H1 (cell line): ENCODE measurements at regions of chr11 and their contacts with region 1.

Region 1: DNA sequence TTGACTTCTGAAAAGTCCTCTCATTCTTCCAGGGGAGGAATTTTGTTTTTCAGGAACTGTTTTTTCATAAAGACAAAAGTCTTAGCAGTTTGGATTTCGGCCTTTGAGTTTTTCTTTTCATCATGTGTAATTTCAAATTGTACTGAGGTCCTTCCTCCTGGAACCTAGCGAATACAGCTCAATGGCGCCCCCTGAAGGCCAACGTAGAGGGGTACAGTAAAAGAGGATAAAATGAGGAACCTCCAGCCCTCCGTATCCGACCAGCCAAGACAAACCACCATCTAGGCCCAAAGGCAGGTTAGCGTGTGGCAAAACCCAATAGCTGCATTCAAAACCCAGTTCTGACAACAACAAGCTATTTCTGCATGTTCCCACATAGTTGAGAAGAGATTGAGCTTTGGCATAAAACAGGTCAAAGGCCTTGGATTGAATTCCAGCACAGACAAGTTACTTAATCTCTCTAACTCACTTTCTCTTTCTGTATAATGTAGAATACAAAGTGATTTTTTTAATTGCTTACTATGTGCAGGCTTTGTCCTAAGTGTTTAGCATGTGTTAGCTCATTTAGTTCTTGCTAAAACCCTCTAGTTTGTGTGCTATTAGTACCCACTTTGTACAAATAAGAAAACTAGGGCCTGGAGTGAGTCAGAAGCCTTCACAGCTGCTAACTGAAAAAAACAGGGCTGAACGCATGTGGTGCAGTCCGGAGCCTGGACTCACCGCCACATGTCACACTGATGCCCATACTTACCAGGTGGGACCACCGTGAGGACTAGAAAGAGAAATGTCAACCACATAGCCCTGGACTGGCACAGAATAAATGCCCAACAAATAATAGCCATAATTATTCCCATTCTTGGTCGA is 43.2 kb upstream of the ETS1 start:
- DNase-seq: peak; percentile 50 to 89
- H3K4me3 ChIP-seq: no peak overlapping the region
- H3K27ac ChIP-seq: no peak overlapping the region
- H3K4me1 ChIP-seq: peaks cover 0 to 2% (median 1%) of the 10 kb centered on the region in 4 experiments; a peak in 1 of 7 replicates
- H3K27me3 ChIP-seq: no peaks in the 10 kb centered on the region
- CTCF ChIP-seq: peak; percentile 62 to 88 (median 84)
- EP300 ChIP-seq: no peak
- POLR2A ChIP-seq: no peak
- RAD21 ChIP-seq: peak; percentile 94 to 97

Region 2: DNA sequence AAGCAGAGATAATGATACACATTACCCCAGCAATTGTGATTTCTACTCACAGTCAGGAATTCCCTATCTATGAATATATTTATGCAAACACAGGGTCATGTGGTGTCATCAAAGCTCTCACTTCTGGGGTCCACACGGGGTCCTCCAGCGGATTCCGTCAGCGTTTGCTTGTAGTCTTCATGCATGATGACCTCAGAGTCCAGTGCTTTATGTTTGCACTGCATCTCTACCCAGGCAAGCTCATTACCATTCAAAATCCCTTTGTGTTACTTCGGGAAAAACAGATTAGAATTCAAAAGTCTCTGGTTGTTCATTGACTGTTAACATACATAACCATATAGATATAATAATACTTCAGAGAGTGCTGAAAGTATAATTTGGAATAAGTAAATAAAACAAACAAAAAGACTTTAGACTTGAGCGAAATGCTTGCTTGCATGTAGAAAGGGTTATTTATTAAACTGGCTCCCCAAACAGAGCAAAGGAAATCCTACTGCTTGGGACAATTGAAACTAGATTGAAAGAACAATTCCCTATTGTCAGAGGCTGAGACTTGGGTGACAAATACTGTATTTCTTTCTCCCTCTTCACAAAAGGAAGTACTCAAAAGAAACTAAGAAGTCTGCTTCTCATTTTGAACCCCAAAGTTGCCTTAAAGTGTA is 466.4 kb before region 1 on chr11:
- CTCF ChIA-PET with region 1: interaction called, 94 read pairs
- POLR2A ChIA-PET with region 1: no interaction called
- DNase-seq: no peak
- H3K4me3 ChIP-seq: no peak overlapping the region
- H3K27ac ChIP-seq: no peak overlapping the region
- H3K4me1 ChIP-seq: no peaks in the 10 kb centered on the region
- H3K27me3 ChIP-seq: peaks cover 0 to 1% (median 0%) of the 10 kb centered on the region in 4 experiments; a peak in 1 of 7 replicates
- CTCF ChIP-seq: no peak
- EP300 ChIP-seq: no peak
- POLR2A ChIP-seq: no peak
- RAD21 ChIP-seq: no peak

Region 3: GRCh38 chr11:128304666-128305485 is 325.7 kb before region 1 on chr11:
- CTCF ChIA-PET with region 1: interaction called, 25 read pairs
- POLR2A ChIA-PET with region 1: no interaction called
- DNase-seq: no peak
- H3K4me3 ChIP-seq: no peak overlapping the region
- H3K27ac ChIP-seq: no peak overlapping the region
- H3K4me1 ChIP-seq: no peaks in the 10 kb centered on the region
- H3K27me3 ChIP-seq: no peaks in the 10 kb centered on the region
- CTCF ChIP-seq: no peak
- EP300 ChIP-seq: no peak
- POLR2A ChIP-seq: no peak
- RAD21 ChIP-seq: no peak

Region 4: GRCh38 chr11:128434818-128435217 is 195.8 kb before region 1 on chr11:
- CTCF ChIA-PET with region 1: interaction called, 10 read pairs
- POLR2A ChIA-PET with region 1: no interaction called
- DNase-seq: no peak
- H3K4me3 ChIP-seq: no peak overlapping the region
- H3K27ac ChIP-seq: no peak overlapping the region
- H3K4me1 ChIP-seq: no peaks in the 10 kb centered on the region
- H3K27me3 ChIP-seq: no peaks in the 10 kb centered on the region
- CTCF ChIP-seq: no peak
- EP300 ChIP-seq: no peak
- POLR2A ChIP-seq: no peak
- RAD21 ChIP-seq: no peak

Region 5: DNA sequence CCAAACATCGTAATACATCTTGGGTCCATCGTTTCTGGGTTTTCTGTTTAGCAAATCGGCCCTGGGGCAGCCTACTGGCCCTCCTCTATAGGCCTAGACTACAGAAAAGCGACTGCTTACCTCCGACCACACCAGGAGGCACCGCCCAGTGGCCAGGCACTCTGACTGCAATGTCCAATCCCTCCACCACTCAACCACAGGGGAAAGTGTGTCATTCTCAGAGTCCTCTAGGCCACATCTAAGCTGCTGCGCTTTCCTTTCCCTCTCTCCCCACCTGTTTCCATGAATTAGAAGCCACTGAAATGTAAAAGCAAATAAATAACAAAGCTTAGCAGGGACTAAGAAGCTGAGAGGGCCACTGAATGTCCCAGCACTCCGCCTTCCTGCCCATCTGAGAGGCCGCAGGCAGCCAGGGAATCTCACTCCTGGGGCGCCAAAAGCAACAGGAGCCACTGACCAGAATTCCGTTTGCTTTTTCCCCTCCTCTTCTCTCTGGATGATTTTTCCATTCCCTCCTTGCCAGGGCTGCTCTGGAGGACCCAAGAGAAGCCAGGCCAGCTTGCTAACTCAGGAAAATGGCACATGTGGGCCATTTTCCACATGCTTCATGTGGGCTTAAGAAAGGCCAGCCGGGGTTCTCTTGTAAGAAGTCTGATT is 13.2 kb after region 1 on chr11:
- CTCF ChIA-PET with region 1: interaction called, 43 read pairs
- POLR2A ChIA-PET with region 1: interaction called, 3 read pairs
- DNase-seq: no peak
- H3K4me3 ChIP-seq: no peak overlapping the region
- H3K27ac ChIP-seq: no peak overlapping the region
- H3K4me1 ChIP-seq: no peaks in the 10 kb centered on the region
- H3K27me3 ChIP-seq: no peaks in the 10 kb centered on the region
- CTCF ChIP-seq: peak; percentile 43 to 65 (median 62)
- EP300 ChIP-seq: no peak
- POLR2A ChIP-seq: no peak
- RAD21 ChIP-seq: peak; percentile 49 to 51

Region 6: GRCh38 chr11:128757235-128757711 is 126.7 kb after region 1 on chr11:
- CTCF ChIA-PET with region 1: interaction called, 11 read pairs
- POLR2A ChIA-PET with region 1: no interaction called
- DNase-seq: no peak
- H3K4me3 ChIP-seq: no peak overlapping the region
- H3K27ac ChIP-seq: no peak overlapping the region
- H3K4me1 ChIP-seq: peaks cover 0 to 3% (median 0%) of the 10 kb centered on the region in 4 experiments; a peak in 1 of 7 replicates
- H3K27me3 ChIP-seq: no peaks in the 10 kb centered on the region; a peak in 1 of 7 replicates
- CTCF ChIP-seq: peak; percentile 41 to 79 (median 64)
- EP300 ChIP-seq: no peak
- POLR2A ChIP-seq: no peak
- RAD21 ChIP-seq: peak; percentile 75 to 81

Region 7: GRCh38 chr11:128859563-128860441 is 229.2 kb after region 1 on chr11:
- CTCF ChIA-PET with region 1: interaction called, 10 read pairs
- POLR2A ChIA-PET with region 1: no interaction called
- DNase-seq: peak; percentile 75 to 99
- H3K4me3 ChIP-seq: no peak overlapping the region
- H3K27ac ChIP-seq: no peak overlapping the region
- H3K4me1 ChIP-seq: peaks cover 0 to 6% (median 2%) of the 10 kb centered on the region in 4 experiments; a peak in 6 of 7 replicates
- H3K27me3 ChIP-seq: peaks cover 0 to 8% (median 0%) of the 10 kb centered on the region in 4 experiments; a peak in 3 of 7 replicates
- CTCF ChIP-seq: peak; percentile 93 to 97 (median 95)
- EP300 ChIP-seq: no peak
- POLR2A ChIP-seq: no peak
- RAD21 ChIP-seq: peak; percentile 70 to 83